Uterus (tissue), 4 donors: ENCODE measurements at regions of chr15 and their contacts with region 1.

Region 1: DNA sequence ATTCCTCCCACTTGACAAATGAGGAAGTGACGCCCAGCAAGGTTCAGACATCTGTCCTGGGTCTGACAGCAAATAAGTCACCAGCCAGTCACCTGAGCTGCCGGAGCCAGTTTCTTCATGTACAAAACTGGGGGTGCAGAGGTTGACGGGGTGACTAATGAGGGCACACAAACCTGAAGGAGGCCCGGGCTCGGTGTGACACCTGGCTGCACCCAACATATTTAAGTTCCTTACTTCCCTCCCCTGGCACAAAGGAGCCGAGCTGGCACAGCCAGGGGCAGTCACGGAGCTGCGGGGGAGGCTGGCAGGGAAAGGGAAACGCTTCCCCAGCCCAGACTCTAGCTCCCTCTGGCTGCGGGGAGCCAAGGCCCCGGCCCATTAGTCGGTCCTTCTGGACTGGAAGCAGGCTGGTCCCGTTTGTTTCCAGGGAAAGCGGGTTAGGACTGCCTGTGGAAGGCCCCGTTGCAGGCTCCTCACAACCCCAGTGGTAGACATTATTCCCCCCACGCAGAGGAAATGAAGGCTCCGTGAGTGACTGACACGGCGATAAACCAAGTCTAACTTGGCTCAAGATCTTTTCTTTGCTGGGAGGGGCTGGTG is 2.3 kb downstream of the FBXL22 start:
- DNase-seq: peak; percentile 65 to 67
- H3K4me3 ChIP-seq: peak overlapping the region; percentile 46 to 51
- H3K27ac ChIP-seq: peak overlapping the region; percentile 84 to 93
- H3K4me1 ChIP-seq: peaks cover 0 to 3% of the 10 kb centered on the region in 2 donors
- H3K27me3 ChIP-seq: no peaks in the 10 kb centered on the region
- CTCF ChIP-seq: peak; percentile 53 to 69 (median 59)
- POLR2A ChIP-seq: no peak

Region 2: DNA sequence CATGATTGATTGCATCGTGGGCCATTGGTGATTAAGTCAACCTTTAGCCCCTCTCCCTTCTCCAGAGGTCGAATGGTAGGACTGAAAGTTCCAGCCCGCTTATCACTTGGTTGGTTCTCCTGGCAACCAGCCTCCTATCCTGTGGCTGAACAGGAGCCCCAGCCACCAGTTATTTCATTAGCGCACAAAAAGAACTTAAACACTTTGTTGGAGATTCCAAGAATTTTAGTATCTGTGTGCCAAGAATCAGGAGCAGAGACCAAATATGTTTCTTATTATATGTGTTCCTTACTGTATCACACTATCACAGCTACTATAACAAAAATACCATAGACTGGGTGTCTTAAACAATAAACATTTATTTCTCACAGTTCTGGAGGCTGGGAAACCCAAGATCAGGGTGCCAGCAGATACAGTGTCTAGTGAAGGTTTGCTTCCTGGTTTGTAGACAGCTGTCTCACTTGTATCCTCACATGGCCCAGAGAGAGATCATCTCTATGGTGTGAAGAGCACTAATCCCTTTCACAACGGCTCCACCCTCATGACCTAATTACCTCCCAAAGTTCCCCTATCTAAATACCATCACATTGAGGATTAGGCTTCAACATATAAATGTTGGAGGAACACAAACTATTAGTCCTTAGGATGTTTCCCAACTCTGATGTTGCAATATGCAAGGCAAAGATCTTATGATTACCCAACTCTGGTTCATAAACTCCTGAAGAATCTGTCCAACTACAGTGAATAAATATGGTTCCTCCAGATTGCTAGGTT is 352.6 kb before region 1 on chr15:
- intact Hi-C with region 1: no loop called
- DNase-seq: peak in 1 of 2 donors; percentile 46
- H3K4me3 ChIP-seq: no peak overlapping the region
- H3K27ac ChIP-seq: peak overlapping the region; percentile 14 to 48
- H3K4me1 ChIP-seq: no peaks in the 10 kb centered on the region
- H3K27me3 ChIP-seq: no peaks in the 10 kb centered on the region
- CTCF ChIP-seq: no peak
- POLR2A ChIP-seq: no peak

Region 3: DNA sequence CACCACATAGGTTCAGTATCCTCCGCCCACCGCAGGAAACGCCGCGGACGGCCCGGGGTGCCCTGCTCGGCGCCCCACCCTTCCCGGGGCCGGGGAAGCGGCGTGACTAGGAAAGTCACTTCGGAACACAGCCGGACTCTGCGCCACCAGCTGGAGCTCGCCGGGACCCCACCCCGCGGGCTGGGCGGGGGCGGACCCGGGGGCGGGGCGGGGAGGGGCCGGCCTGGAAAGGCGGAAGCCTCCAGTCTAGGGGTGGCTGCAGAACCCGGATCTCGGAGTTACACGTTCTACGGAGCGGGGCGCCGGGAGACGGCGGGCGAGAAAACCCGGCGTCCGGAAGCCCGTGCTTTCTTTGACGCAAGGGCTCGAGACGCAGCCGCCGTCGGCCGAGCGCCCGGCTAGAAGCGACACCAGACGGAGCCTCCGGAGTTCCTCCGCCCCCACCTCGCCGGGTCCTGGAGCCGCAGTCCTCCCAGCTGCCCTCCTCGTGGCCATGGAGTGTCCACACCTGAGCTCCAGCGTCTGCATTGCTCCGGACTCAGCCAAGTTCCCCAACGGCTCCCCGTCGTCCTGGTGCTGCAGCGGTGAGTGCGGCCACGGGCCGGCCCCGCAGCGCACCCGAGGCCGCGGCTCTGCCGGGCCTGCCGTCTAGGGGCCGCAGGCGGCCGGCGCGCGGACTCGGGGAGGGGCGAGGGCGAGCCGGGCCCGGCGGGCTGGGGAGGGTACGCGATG is 95.1 kb before region 1 on chr15 and contains the start of gene USP3:
- intact Hi-C with region 1: loop called (anchors 10 kb)
- DNase-seq: peak; percentile 92 to 97
- H3K4me3 ChIP-seq: peak within 1 kb of the TSS; percentile 79 to 84
- H3K27ac ChIP-seq: peak within 1 kb of the TSS; percentile 95 to 98
- H3K4me1 ChIP-seq: peaks cover 14 to 16% of the 10 kb centered on the region in 2 donors
- H3K27me3 ChIP-seq: no peaks in the 10 kb centered on the region
- CTCF ChIP-seq: peak in 3 of 4 experiments; percentile 19 to 48 (median 44)
- POLR2A ChIP-seq: peak; percentile 80 to 90
- total RNA-seq, gene USP3: 26.5 to 96.3 (median 65.8) TPM